Naive thymus-derived CD8-positive, alpha-beta T cell (primary cell): ENCODE measurements at regions of chr12 and their contacts with region 1.

Region 1: GRCh38 chr12:114627393-114627792 is 56.6 kb downstream of the TBX3 start:
- DNase-seq: no peak
- ATAC-seq: no peak
- H3K4me3 Mint-ChIP-seq: no peak overlapping the region
- H3K27ac Mint-ChIP-seq: no peak overlapping the region
- H3K4me1 Mint-ChIP-seq: no peaks in the 10 kb centered on the region
- H3K27me3 Mint-ChIP-seq: peaks cover 1 to 43% (median 12%) of the 10 kb centered on the region in 5 donors

Region 2: GRCh38 chr12:113306382-113306781 is 1321.0 kb before region 1 on chr12:
- POLR2A ChIA-PET with region 1: interaction called, 10 read pairs
- DNase-seq: no peak
- ATAC-seq: no peak
- H3K4me3 Mint-ChIP-seq: no peak overlapping the region
- H3K27ac Mint-ChIP-seq: peak overlapping the region in 1 of 10 donors; percentile 66
- H3K4me1 Mint-ChIP-seq: peaks cover 16 to 19% (median 18%) of the 10 kb centered on the region in 4 donors
- H3K27me3 Mint-ChIP-seq: no peaks in the 10 kb centered on the region